AG04449 (cell line): ENCODE measurements at regions of chr7 and their contacts with region 1.

Region 1: GRCh38 chr7:117323851-117324701 is 1.2 kb upstream of the WNT2 start:
- DNase-seq: no peak
- H3K4me3 ChIP-seq: peak overlapping the region; percentile 54
- CTCF ChIP-seq: no peak

Region 2: DNA sequence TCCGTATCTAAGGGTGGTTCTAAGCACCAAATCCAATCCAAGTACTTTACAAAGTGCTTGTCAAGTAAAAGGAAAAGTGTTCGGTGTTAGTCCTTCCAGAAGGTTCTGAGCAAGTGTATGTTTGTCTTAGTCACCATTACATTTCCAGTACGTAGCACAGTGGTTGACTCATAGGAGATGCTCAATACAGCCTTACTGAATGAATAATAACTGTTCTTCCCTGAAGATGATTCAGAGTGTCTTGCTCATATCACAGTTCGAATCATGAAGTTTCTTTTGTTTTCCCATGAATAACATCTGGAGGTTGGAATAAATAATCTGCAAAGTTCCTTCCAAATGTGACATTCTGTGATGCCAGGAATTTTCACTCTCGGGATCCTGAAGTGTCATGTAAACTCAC is 54.7 kb before region 1 on chr7:
- CTCF ChIA-PET with region 1: no interaction called
- POLR2A ChIA-PET with region 1: no interaction called
- DNase-seq: peak; percentile 92
- H3K4me3 ChIP-seq: no peak overlapping the region
- CTCF ChIP-seq: no peak

Region 3: DNA sequence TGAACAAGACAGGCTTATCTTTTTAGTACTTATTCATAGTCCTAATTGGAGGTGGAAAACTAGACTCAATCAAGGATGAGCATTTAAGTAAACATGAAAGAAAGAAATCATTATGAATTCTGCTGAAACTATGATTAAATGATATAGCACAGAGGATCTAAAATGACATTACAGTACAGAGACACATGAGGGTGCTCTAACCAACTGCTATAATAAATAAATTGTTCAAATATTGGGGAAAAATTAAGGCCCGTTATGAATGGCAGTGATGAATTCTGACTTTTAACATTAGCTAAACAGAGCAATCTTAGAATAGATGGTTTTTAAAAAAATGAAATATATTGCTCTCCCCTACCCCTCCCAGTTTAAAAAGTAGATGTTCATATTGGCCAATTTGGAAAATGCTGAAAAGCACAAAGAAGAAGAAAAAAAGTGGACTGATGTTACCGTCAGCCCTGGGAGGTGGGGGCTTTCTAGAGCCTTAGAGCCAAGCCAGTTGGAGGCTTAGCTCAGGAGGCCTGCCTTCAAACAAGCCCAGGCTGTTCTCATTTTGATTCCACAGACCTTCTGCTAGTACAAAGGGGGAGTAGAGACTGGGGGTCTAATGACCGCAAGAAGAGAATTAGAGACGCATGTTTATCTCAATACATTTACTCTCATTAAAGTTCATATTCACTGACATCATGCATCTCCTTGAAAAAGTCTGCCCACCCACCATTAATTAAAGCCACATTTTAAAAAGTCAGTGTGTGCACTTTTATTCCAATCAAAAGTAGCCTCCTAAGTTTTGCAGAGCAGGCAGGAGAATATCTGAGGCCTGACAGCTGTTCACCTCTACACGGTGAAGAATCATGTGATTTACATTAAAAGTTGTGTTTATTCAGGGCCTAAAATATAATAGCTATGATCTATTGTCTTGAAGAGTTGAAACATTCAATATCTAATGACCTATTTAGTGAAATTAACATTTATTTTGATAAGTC is 11.2 kb before region 1 on chr7:
- CTCF ChIA-PET with region 1: interaction called, 24 read pairs
- POLR2A ChIA-PET with region 1: no interaction called
- DNase-seq: no peak
- H3K4me3 ChIP-seq: no peak overlapping the region
- CTCF ChIP-seq: no peak

Region 4: DNA sequence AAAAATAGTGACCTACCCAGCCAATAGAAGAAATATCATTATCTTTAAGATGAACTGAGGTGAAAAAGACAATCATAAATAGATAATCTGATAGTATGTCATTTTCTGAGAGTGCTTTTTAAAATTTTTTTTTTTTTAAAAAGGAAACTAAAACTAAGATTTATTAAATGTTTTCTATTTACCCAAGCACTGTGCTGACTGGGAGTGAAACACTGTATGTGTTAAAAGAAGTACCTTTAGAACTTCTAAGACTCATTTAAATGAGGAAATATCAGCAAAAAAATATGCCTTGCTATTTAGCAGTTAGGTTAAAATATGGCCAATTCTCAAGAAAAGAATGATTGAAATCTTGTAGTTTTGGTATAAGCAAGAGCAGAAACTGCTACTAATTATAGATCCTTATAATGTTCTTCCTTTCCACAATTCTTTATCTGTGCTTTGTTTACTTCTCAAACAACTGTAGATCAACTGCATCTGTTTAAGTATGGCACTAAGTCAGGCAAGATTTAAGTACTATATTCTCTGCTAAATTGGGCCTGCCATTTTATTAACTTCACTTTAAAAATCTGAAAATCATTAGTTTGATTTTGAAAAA is 38.3 kb after region 1 on chr7:
- CTCF ChIA-PET with region 1: no interaction called
- POLR2A ChIA-PET with region 1: no interaction called
- DNase-seq: no peak
- H3K4me3 ChIP-seq: no peak overlapping the region
- CTCF ChIP-seq: no peak